CD8-positive, alpha-beta T cell (primary cell): ENCODE measurements at regions of chr17 and their contacts with region 1.

Region 1: GRCh38 chr17:48047741-48048383 is at the start of gene NFE2L1:
- DNase-seq: peak; percentile 93 to 99 (median 97)
- ATAC-seq: peak; percentile 96
- H3K4me3 ChIP-seq: peak within 1 kb of the TSS; percentile 69 to 77
- H3K4me3 Mint-ChIP-seq: peak within 1 kb of the TSS; percentile 93
- H3K27ac ChIP-seq: peak within 1 kb of the TSS; percentile 88 to 91
- H3K27ac Mint-ChIP-seq: peak within 1 kb of the TSS; percentile 99
- H3K4me1 ChIP-seq: peaks cover 41% of the 10 kb centered on the region
- H3K4me1 Mint-ChIP-seq: peaks cover 57% of the 10 kb centered on the region
- H3K27me3 ChIP-seq: no peaks in the 10 kb centered on the region
- H3K27me3 Mint-ChIP-seq: no peaks in the 10 kb centered on the region
- CTCF ChIP-seq: no peak
- total RNA-seq, gene NFE2L1: 29.5 to 32.5 TPM

Region 2: GRCh38 chr17:47649153-47649971 is 398.5 kb before region 1 on chr17 and contains the start of gene KPNB1:
- CTCF ChIA-PET with region 1: no interaction called
- POLR2A ChIA-PET with region 1: interaction called, 4 read pairs
- intact Hi-C with region 1: loop called (anchors 5 kb)
- DNase-seq: peak; percentile 94 to 99 (median 97)
- ATAC-seq: peak; percentile 82
- H3K4me3 ChIP-seq: peak within 1 kb of the TSS; percentile 70 to 89
- H3K4me3 Mint-ChIP-seq: peak within 1 kb of the TSS; percentile 100
- H3K27ac ChIP-seq: peak within 1 kb of the TSS; percentile 75 to 90
- H3K27ac Mint-ChIP-seq: peak within 1 kb of the TSS; percentile 99
- H3K4me1 ChIP-seq: peaks cover 41% of the 10 kb centered on the region
- H3K4me1 Mint-ChIP-seq: peaks cover 51% of the 10 kb centered on the region
- H3K27me3 ChIP-seq: no peaks in the 10 kb centered on the region
- H3K27me3 Mint-ChIP-seq: no peaks in the 10 kb centered on the region
- CTCF ChIP-seq: no peak
- total RNA-seq, gene KPNB1: 170 to 173 TPM

Region 3: GRCh38 chr17:48037036-48037837 is 10.6 kb before region 1 on chr17 and contains the start of gene COPZ2:
- CTCF ChIA-PET with region 1: interaction called, 28 read pairs
- POLR2A ChIA-PET with region 1: interaction called, 20 read pairs
- intact Hi-C with region 1: loop called (anchors 1 kb)
- DNase-seq: peak in 8 of 9 experiments; percentile 51 to 83 (median 72)
- ATAC-seq: peak; percentile 98
- H3K4me3 ChIP-seq: peak within 1 kb of the TSS; percentile 70 to 73
- H3K4me3 Mint-ChIP-seq: peak within 1 kb of the TSS; percentile 87
- H3K27ac ChIP-seq: no peak within 1 kb of the TSS
- H3K27ac Mint-ChIP-seq: no peak within 1 kb of the TSS
- H3K4me1 ChIP-seq: no peaks in the 10 kb centered on the region
- H3K4me1 Mint-ChIP-seq: peaks cover 6% of the 10 kb centered on the region
- H3K27me3 ChIP-seq: peaks cover 0 to 15% of the 10 kb centered on the region in 2 experiments
- H3K27me3 Mint-ChIP-seq: peaks cover 29% of the 10 kb centered on the region
- CTCF ChIP-seq: peak; percentile 83
- total RNA-seq, gene COPZ2: 0.57 to 0.92 TPM

Region 4: GRCh38 chr17:48074315-48075081 is 26.6 kb after region 1 on chr17:
- CTCF ChIA-PET with region 1: interaction called, 7 read pairs
- POLR2A ChIA-PET with region 1: interaction called, 6 read pairs
- intact Hi-C with region 1: loop called in 1 of 2 experiments (anchors 1 kb)
- DNase-seq: peak; percentile 56 to 82 (median 78)
- ATAC-seq: peak; percentile 87
- H3K4me3 ChIP-seq: no peak overlapping the region
- H3K4me3 Mint-ChIP-seq: no peak overlapping the region
- H3K27ac ChIP-seq: no peak overlapping the region
- H3K27ac Mint-ChIP-seq: no peak overlapping the region
- H3K4me1 ChIP-seq: no peaks in the 10 kb centered on the region
- H3K4me1 Mint-ChIP-seq: no peaks in the 10 kb centered on the region
- H3K27me3 ChIP-seq: no peaks in the 10 kb centered on the region
- H3K27me3 Mint-ChIP-seq: no peaks in the 10 kb centered on the region
- CTCF ChIP-seq: peak; percentile 76

Region 5: GRCh38 chr17:48101012-48101720 is 53.3 kb after region 1 on chr17 and contains the start of gene CBX1:
- CTCF ChIA-PET with region 1: no interaction called
- POLR2A ChIA-PET with region 1: interaction called, 3 read pairs
- intact Hi-C with region 1: loop called (anchors 1 to 2 kb)
- DNase-seq: peak; percentile 84 to 96 (median 94)
- ATAC-seq: peak; percentile 96
- H3K4me3 ChIP-seq: peak within 1 kb of the TSS; percentile 65 to 91
- H3K4me3 Mint-ChIP-seq: peak within 1 kb of the TSS; percentile 89
- H3K27ac ChIP-seq: peak within 1 kb of the TSS; percentile 24 to 50
- H3K27ac Mint-ChIP-seq: peak within 1 kb of the TSS; percentile 79
- H3K4me1 ChIP-seq: peaks cover 21% of the 10 kb centered on the region
- H3K4me1 Mint-ChIP-seq: peaks cover 37% of the 10 kb centered on the region
- H3K27me3 ChIP-seq: no peaks in the 10 kb centered on the region
- H3K27me3 Mint-ChIP-seq: no peaks in the 10 kb centered on the region
- CTCF ChIP-seq: no peak
- total RNA-seq, gene CBX1: 5.4 to 6.6 TPM